ENCODE measurements at regions of chr19 and their contacts with region 1.

Region 1: DNA sequence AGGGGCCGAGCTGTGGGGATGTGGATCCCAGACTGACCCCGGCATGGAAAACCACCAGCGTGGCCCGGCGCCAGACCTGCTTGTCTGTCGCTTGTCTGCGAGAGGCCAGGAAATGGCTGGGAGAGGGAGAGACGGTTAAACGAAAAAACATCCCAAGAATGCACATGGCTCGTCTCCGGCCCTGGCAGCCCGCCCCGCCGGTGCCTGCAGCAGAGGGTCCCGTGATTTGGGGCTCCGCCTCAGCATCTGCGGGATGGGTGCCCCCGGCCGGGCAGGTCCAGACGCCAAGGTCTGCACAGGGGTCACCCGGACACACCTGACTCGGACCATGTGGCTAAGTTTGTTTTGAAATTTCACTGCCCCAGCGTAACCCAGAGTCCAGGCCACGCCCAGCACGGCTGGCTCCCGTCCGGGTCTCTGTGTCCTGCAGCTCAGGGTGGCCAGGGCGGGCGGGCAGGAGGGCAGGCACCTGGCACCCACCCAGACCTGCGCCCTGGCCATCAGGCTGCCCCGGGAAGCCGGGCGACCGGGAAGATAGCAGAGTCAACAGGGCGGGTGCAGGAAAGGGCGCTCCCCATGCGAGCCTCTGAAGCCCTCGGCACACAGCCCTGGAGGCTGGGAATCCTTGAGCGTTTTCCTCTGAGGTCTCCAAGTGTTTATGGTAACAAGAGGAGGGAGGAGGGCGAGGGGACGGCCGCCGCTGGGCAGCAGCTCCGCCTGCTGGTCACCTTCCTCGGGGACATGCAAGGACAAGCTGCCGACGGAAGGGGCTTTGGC is 103.2 kb downstream of the GADD45B start:
- DNase-seq: peak; percentile 92
- ATAC-seq: peak; percentile 78
- H3K4me3 Mint-ChIP-seq: peak overlapping the region; percentile 65
- H3K27ac Mint-ChIP-seq: peak overlapping the region; percentile 92
- H3K4me1 Mint-ChIP-seq: peaks cover 14% of the 10 kb centered on the region
- H3K27me3 Mint-ChIP-seq: peaks cover 4% of the 10 kb centered on the region; the same call in 1 of the 2 replicates
- CTCF ChIP-seq: peak; percentile 54

Region 2: DNA sequence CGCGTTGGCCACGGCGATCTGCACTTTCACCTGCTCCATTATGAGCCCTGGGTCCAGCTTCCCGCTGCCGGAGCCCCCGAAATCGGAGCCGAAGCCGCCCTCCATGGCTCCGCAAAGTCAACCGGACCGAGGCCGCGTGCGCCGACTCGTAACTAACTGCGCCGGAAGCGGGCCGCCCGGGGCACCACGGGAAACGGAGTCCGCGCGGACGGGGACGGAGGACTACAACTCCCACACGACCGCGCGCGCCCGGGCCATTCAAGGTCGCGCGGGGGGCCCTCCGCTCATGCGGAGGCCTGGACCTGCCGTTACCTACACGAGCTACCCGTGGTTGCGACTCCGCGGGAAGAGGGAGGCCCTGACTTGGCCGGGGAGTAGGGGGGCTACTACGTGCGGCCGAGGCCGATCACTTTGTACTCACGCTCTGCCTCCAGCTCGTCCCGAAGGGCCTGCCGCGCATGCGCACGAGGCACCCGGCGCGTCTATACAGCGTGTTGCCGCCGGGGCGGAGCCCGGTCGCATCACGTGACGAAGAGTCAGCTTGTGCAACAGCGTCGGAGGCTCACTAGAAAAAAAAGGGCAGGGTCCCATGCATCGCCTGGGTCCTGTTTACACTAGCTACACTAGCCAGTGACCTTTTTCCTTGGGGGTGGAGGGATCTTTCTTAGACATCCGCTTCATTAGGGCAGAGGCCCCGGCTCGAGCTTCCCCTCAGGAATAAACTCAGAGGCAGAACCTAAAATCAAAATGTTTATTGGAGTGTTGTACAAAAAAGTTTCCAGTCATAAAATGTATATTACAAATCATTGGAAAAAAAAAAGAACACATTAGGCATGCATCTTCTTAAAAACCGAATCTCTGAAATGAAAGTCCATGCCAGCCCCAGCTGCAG is 151.4 kb before region 1 on chr19 and contains the start of gene TIMM13:
- CTCF ChIA-PET with region 1: interaction called, 12 read pairs
- POLR2A ChIA-PET with region 1: no interaction called
- DNase-seq: peak; percentile 97
- ATAC-seq: peak; percentile 50
- H3K4me3 Mint-ChIP-seq: peak within 1 kb of the TSS; percentile 88
- H3K27ac Mint-ChIP-seq: peak within 1 kb of the TSS; percentile 97
- H3K4me1 Mint-ChIP-seq: peaks cover 27% of the 10 kb centered on the region
- H3K27me3 Mint-ChIP-seq: no peaks in the 10 kb centered on the region
- CTCF ChIP-seq: no peak
- total RNA-seq, gene TIMM13: 296 to 342 TPM (median 309 TPM) in 3 replicates

Region 3: GRCh38 chr19:2475702-2476450 is 103.2 kb before region 1 on chr19 and contains the start of gene GADD45B:
- CTCF ChIA-PET with region 1: interaction called, 110 read pairs
- POLR2A ChIA-PET with region 1: interaction called, 52 read pairs
- DNase-seq: peak; percentile 95
- ATAC-seq: peak; percentile 51
- H3K4me3 Mint-ChIP-seq: peak within 1 kb of the TSS; percentile 93
- H3K27ac Mint-ChIP-seq: peak within 1 kb of the TSS; percentile 88
- H3K4me1 Mint-ChIP-seq: peaks cover 24% of the 10 kb centered on the region
- H3K27me3 Mint-ChIP-seq: peaks cover 47% of the 10 kb centered on the region
- CTCF ChIP-seq: no peak
- total RNA-seq, gene GADD45B: 17.9 to 27.5 TPM (median 23.2 TPM) in 3 replicates

Region 4: GRCh38 chr19:2494444-2495129 is 84.5 kb before region 1 on chr19:
- CTCF ChIA-PET with region 1: interaction called, 21 read pairs
- POLR2A ChIA-PET with region 1: no interaction called
- DNase-seq: no peak
- ATAC-seq: peak; percentile 47
- H3K4me3 Mint-ChIP-seq: peak overlapping the region; percentile 66
- H3K27ac Mint-ChIP-seq: no peak overlapping the region
- H3K4me1 Mint-ChIP-seq: peaks cover 18% of the 10 kb centered on the region
- H3K27me3 Mint-ChIP-seq: peaks cover 47% of the 10 kb centered on the region
- CTCF ChIP-seq: no peak

Region 5: GRCh38 chr19:2552859-2553258 is 26.2 kb before region 1 on chr19:
- CTCF ChIA-PET with region 1: interaction called, 10 read pairs
- POLR2A ChIA-PET with region 1: interaction called, 5 read pairs
- DNase-seq: no peak
- ATAC-seq: no peak
- H3K4me3 Mint-ChIP-seq: no peak overlapping the region
- H3K27ac Mint-ChIP-seq: peak overlapping the region; percentile 73; the same call in 1 of the 2 replicates
- H3K4me1 Mint-ChIP-seq: peaks cover 5% of the 10 kb centered on the region
- H3K27me3 Mint-ChIP-seq: no peaks in the 10 kb centered on the region
- CTCF ChIP-seq: no peak

Region 6: GRCh38 chr19:2636897-2637683 is 58.0 kb after region 1 on chr19:
- CTCF ChIA-PET with region 1: interaction called, 16 read pairs
- POLR2A ChIA-PET with region 1: no interaction called
- DNase-seq: peak; percentile 76
- ATAC-seq: peak; percentile 70
- H3K4me3 Mint-ChIP-seq: peak overlapping the region; percentile 63
- H3K27ac Mint-ChIP-seq: no peak overlapping the region
- H3K4me1 Mint-ChIP-seq: peaks cover 17% of the 10 kb centered on the region
- H3K27me3 Mint-ChIP-seq: no peaks in the 10 kb centered on the region; the same call in 1 of the 2 replicates
- CTCF ChIP-seq: peak; percentile 83; the same call in 1 of the 2 replicates

Region 7: GRCh38 chr19:2702162-2703076 is 123.3 kb after region 1 on chr19 and contains the start of gene GNG7:
- CTCF ChIA-PET with region 1: no interaction called
- POLR2A ChIA-PET with region 1: no interaction called
- DNase-seq: peak; percentile 96
- ATAC-seq: peak; percentile 99
- H3K4me3 Mint-ChIP-seq: peak within 1 kb of the TSS; percentile 79
- H3K27ac Mint-ChIP-seq: peak within 1 kb of the TSS; percentile 53; the same call in 1 of the 2 replicates
- H3K4me1 Mint-ChIP-seq: peaks cover 16% of the 10 kb centered on the region
- H3K27me3 Mint-ChIP-seq: peaks cover 24% of the 10 kb centered on the region
- CTCF ChIP-seq: no peak
- total RNA-seq, gene GNG7: 9.6 to 14.3 TPM (median 13.2 TPM) in 3 replicates